Left ventricle myocardium superior (tissue), 1 donor: ENCODE measurements at regions of chr7 and their contacts with region 1.

Region 1: DNA sequence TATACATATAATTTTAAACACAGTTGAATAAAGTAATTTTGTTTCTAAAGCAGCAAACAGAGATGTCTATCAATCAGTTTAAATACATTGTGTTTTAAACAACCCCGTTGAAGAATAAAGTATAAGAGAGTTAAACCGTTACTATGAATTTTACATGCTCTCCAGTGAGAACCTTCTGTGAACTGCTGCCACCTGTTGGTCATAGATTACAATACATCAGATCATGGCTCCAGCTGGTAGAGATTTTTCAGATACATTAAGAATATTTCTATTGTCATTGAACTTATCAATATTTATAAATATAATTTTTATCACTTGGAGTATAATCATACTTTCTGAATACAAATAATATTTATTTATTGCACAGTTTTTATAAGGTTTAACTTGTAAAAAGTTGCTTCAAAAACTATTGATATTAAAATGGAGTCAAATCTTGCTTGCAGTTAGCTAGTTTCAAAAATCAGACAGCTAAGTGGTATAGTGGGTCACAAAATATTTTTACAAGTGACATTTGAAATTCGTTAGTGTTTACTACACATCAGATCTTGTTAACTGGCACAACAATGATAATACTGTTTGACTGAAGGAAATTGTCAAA is 561.2 kb upstream of the PHF14 start:
- DNase-seq: no peak
- ATAC-seq: no peak

Region 2: GRCh38 chr7:9761224-9761623 is 651.3 kb before region 1 on chr7:
- intact Hi-C with region 1: no loop called
- DNase-seq: no peak
- ATAC-seq: no peak

Region 3: GRCh38 chr7:10022957-10023356 is 389.6 kb before region 1 on chr7:
- intact Hi-C with region 1: loop called (anchors 5 kb)
- DNase-seq: no peak
- ATAC-seq: peak; percentile 18

Region 4: DNA sequence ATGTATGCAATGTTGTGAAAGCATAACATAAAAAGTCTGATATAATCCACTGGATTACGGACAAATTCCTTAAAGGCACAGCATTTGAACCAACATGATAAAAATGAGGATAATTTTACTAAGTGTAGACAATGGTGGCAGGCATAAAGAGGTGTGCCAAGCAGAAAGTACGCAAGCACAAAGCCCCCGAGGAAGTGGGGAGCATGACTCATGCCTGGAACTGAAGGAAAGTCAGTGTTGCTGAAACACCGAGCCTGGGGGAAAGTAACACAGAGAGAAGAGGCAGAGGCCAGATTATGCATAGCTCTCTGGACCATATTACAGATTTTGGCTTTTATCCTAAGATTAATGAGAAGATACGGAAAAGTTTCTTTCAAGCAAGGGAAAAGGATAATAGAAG is 71.2 kb after region 1 on chr7:
- intact Hi-C with region 1: no loop called
- DNase-seq: no peak
- ATAC-seq: no peak